AG04449 (cell line): ENCODE measurements at regions of chr3 and their contacts with region 1.

Region 1: DNA sequence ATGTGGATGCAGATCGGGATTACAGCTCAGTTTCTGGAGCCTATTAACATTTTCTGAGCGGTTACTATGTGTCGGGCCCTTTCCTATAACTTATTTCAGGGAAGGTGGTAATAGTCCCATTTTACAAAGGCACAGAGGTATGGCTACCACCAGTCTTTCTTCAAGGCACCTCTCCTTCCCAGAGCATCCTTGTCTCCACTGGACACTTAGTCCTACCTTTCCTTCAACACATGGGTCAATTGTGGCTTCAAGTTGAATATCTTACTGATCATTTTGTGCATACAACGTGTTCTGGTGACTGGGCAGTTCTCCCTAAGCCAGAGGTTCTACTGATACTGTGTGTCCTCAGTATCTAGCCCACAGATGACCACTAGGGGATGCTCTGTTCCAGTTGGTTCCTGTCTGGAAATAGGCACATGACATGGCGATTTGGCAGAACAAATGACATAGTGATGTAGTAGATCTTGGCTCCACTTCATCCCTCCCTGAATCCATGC is 60.7 kb upstream of the CMTM8 start:
- DNase-seq: peak; percentile 5
- H3K4me3 ChIP-seq: no peak overlapping the region
- CTCF ChIP-seq: peak; percentile 65

Region 2: GRCh38 chr3:32082721-32083120 is 95.0 kb before region 1 on chr3:
- CTCF ChIA-PET with region 1: no interaction called
- POLR2A ChIA-PET with region 1: no interaction called
- DNase-seq: no peak
- H3K4me3 ChIP-seq: no peak overlapping the region
- CTCF ChIP-seq: no peak

Region 3: GRCh38 chr3:32143849-32144757 is 33.6 kb before region 1 on chr3:
- CTCF ChIA-PET with region 1: interaction called, 34 read pairs
- POLR2A ChIA-PET with region 1: no interaction called
- DNase-seq: peak; percentile 95
- H3K4me3 ChIP-seq: no peak overlapping the region
- CTCF ChIP-seq: peak; percentile 77

Region 4: GRCh38 chr3:32154205-32154579 is 23.6 kb before region 1 on chr3:
- CTCF ChIA-PET with region 1: interaction called, 34 read pairs
- POLR2A ChIA-PET with region 1: no interaction called
- DNase-seq: no peak
- H3K4me3 ChIP-seq: no peak overlapping the region
- CTCF ChIP-seq: peak; percentile 25

Region 5: DNA sequence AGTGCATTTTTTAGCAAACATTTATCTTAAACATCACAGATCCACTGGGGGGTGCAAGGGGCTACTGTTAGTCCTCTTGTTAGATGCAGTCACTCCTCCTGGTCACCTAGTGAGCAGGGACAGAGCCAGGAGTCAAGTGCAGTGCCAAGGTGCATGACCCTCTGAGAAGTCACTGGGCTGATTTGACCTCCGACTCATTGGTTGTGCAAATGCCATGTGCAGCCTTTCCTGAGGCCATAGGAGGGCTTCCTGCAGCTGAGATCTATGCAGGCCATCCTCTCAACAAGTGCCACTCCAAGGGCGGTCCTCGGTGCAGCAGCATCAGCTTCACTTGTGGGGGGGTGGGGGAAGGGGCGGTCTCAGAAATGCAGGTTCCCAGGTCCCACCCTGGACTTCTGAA is 11.1 kb before region 1 on chr3:
- CTCF ChIA-PET with region 1: interaction called, 31 read pairs
- POLR2A ChIA-PET with region 1: no interaction called
- DNase-seq: no peak
- H3K4me3 ChIP-seq: no peak overlapping the region
- CTCF ChIP-seq: no peak

Region 6: GRCh38 chr3:32200490-32200889 is 22.7 kb after region 1 on chr3:
- CTCF ChIA-PET with region 1: interaction called, 12 read pairs
- POLR2A ChIA-PET with region 1: no interaction called
- DNase-seq: no peak
- H3K4me3 ChIP-seq: no peak overlapping the region
- CTCF ChIP-seq: no peak

Region 7: DNA sequence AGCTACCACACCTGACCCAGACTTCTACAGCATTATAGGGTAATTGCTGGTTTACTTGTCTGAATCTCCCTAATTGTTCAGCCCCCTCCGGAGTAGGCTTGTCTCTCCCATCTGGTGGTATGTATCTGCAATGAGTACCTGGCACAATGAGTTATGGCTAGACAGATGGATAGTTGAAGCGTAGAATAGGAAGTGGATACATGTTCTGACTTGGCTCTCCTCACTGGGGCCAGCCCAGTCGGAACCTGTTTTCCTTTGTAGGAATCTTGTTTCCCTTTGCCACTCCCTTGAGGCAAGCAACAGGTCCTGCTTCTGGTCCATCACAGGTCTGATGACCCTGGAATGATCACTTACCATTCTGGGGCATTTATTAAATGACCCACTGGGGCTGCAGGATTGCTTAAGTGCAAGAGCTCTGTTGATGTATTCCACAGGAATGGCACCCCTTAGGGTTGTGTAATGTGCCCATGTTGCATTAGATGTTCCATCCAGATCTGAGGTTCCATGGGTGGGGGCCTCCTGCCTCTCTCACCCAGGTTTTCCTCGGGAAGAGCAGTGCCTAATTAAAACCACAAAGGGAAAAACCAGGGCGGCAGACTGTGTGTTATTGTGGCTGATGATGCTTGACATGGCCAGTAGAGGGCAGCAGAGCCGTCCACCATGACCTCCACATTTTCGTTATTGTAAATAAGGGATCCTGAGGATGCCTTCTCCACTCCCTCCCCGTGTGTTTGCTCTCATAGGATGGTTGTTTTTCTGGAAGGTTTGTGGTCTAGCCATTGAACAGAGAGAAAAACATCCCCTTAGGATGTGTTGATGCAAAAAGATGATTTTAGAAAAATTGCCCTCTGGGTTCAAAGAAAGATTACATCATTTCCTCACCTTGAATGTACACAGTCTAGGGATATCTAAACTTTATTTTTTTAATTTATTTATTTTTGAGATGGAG is 118.8 kb after region 1 on chr3:
- CTCF ChIA-PET with region 1: interaction called, 11 read pairs
- POLR2A ChIA-PET with region 1: no interaction called
- DNase-seq: no peak
- H3K4me3 ChIP-seq: no peak overlapping the region
- CTCF ChIP-seq: peak; percentile 90

Region 8: DNA sequence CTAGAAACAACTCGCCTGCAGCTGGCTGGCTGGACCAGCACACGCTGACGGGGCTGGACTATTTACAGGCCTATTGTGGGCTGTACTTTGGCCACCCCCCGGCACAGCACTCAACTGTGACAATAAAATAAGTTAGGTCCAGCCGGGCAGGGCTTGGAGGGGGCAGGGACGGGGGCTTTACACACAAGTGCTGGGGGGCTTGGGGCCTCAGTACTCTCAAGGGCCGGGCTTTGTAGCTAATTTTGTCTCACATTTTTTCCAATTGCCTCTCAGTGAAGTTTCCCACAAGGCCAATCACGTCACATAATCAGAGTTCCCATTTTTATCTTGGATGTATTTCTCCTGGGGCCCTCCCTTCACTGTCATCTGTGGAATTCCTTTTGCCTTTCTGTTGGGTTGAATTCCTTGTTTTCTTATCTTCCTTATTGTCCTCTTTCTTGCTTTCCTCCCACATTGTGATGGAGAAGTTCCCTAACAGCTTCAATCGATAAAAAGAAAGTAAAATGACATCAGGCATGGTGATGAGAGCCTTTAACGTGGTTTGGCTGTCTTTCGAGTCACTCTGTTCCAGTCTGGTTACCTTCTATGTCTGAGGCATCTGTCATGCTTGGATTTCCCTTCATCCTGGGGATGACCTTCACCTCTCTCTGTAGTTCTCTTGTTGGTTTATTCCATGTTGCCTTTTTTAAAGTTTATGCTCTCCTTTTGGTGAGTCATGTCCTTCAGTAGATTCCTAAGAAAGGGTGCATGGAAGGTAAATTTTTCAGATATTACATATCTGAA is 169.8 kb after region 1 on chr3:
- CTCF ChIA-PET with region 1: interaction called, 14 read pairs
- POLR2A ChIA-PET with region 1: no interaction called
- DNase-seq: no peak
- H3K4me3 ChIP-seq: no peak overlapping the region
- CTCF ChIP-seq: no peak